Esophagus muscularis mucosa (tissue), 4 donors: ENCODE measurements at regions of chr3 and their contacts with region 1.

Region 1: DNA sequence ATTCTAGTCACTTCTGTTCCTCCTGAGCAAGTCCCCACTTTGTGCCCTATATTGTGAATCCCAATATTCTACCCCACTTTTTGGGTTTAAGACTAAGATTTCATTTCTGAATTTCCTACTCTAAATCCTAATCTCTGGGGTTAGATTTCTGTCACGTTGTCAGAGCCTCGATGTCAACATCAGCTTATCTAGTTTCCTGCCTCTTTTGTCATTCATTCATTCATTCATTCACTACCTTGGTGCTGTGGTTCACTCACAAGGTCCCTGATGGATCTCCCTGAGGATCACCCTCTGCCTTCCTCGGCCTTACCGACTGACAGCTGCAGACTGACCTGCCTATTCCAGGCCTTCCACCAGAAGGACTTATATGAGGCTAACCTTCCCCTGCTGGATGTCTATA is 18.3 kb downstream of the ANKUB1 start:
- DNase-seq: no peak
- H3K4me3 ChIP-seq: no peak overlapping the region
- H3K27ac ChIP-seq: no peak overlapping the region
- H3K4me1 ChIP-seq: peaks cover 0 to 4% (median 0%) of the 10 kb centered on the region in 4 donors
- H3K27me3 ChIP-seq: peaks cover 0 to 1% (median 0%) of the 10 kb centered on the region in 4 donors
- CTCF ChIP-seq: no peak
- EP300 ChIP-seq: no peak
- POLR2A ChIP-seq: no peak

Region 2: GRCh38 chr3:149494022-149494758 is 279.9 kb before region 1 on chr3:
- intact Hi-C with region 1: loop called (anchors 2 kb)
- DNase-seq: no peak
- H3K4me3 ChIP-seq: no peak overlapping the region
- H3K27ac ChIP-seq: no peak overlapping the region
- H3K4me1 ChIP-seq: no peaks in the 10 kb centered on the region
- H3K27me3 ChIP-seq: no peaks in the 10 kb centered on the region
- CTCF ChIP-seq: peak; percentile 74 to 82 (median 76)
- EP300 ChIP-seq: no peak
- POLR2A ChIP-seq: no peak